ENCODE measurements at regions of chr5 and their contacts with region 1.

Region 1: GRCh38 chr5:141811287-141812155 is 66.7 kb downstream of the PCDH1 start:
- DNase-seq: peak; percentile 80
- ATAC-seq: peak; percentile 62
- H3K4me3 Mint-ChIP-seq: peak overlapping the region; percentile 61
- H3K27ac Mint-ChIP-seq: peak overlapping the region; percentile 61; the same call in 1 of the 2 replicates
- H3K4me1 Mint-ChIP-seq: peaks cover 85% of the 10 kb centered on the region
- H3K27me3 Mint-ChIP-seq: peaks cover 2% of the 10 kb centered on the region; the same call in 1 of the 2 replicates
- CTCF ChIP-seq: peak; percentile 67

Region 2: DNA sequence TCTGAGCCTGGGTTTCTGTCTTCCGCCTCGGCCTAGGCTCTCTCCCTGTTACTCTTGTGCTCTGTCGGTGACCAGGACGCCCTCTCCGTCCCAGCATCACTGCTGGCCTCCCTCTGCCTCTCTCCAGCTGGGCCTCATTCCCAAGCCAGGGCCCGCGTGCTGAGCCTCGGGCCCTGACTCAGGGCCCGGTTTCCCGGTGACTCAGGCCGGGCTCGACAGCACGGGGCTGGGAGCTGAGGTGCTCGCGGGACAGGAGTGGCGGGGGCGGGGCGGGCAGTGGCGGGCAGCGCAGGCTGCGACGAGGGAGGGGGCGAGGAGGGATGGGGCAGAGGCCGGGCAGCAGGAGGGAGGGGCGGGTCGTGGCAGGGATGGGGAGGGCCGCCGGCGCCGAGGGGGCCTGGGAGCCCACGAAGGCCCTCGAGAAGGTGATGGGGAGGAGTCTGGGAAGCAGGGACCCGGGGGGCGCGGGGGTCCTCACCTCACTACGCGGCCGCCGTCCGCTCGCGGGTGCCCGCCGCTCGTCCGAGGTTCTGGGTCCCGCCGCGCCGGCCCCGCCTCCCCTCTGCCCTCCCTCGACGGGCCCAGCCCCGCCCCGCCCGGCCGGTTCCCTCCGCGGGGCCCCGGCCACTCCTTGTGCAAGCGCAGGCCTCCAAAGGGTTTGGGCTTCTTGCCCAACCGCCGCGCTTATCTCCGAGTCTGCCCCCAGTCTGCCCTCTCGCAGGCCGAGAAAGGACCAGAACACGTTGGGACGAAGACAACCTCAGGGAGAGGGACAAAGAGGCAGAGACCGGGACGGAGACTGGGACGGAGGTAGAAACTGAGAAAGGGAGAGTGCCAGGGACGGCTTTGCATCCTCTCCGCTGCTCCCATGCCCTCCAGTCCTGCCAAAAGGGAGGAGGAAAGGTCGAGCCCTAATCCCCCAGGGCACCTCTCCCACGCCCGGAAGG is 129.6 kb before region 1 on chr5 and contains the start of gene ARAP3:
- CTCF ChIA-PET with region 1: interaction called, 11 read pairs
- POLR2A ChIA-PET with region 1: interaction called, 3 read pairs
- DNase-seq: peak; percentile 76
- ATAC-seq: peak; percentile 50
- H3K4me3 Mint-ChIP-seq: peak within 1 kb of the TSS; percentile 84
- H3K27ac Mint-ChIP-seq: peak within 1 kb of the TSS; percentile 96
- H3K4me1 Mint-ChIP-seq: peaks cover 50% of the 10 kb centered on the region
- H3K27me3 Mint-ChIP-seq: no peaks in the 10 kb centered on the region
- CTCF ChIP-seq: no peak
- total RNA-seq, gene ARAP3: 51.2 to 60.4 TPM (median 53.4 TPM) in 3 replicates

Region 3: DNA sequence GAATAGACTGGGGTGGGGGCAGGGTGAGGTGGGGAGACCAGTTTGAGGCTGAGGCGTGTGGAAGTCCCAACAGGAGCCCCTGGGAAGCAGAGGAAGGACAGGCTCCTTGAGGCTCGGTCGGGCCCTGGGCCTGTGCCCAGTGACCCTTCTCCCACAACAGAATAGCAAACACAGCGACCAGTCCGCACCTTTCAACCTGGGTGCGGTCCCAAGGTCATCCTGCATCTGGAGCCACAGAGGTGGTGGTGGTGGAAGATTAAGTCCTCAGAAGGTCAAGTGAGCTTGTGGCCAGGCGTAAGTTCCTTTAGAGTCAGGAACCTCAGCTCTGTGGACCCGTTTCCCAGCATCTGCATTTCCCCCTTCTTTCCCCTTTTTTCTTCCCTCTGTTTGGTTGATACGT is 103.5 kb before region 1 on chr5:
- CTCF ChIA-PET with region 1: interaction called, 55 read pairs
- POLR2A ChIA-PET with region 1: no interaction called
- DNase-seq: no peak
- ATAC-seq: no peak
- H3K4me3 Mint-ChIP-seq: no peak overlapping the region
- H3K27ac Mint-ChIP-seq: no peak overlapping the region
- H3K4me1 Mint-ChIP-seq: no peaks in the 10 kb centered on the region; the same call in none of the 2 replicates
- H3K27me3 Mint-ChIP-seq: no peaks in the 10 kb centered on the region; the same call in 1 of the 2 replicates
- CTCF ChIP-seq: no peak

Region 4: DNA sequence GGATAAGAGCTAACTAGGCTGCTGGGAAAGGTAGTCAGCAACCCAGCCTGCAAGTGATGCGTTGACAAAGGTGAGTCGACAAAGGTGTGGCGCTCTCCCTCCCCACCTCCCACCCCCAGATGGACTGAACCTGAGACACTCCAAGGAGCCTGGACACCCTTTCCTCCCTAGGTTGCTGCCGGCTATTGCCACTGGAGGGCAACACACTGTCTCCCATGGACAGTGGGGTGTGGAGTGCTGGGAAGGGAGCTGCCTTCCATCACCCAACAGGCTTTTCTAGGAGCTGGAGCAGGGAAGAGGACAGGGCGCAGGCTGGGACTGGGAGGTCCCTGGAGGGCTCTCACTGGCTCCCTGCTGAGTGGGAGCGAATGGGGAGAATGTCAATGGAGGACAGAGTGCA is 54.1 kb before region 1 on chr5:
- CTCF ChIA-PET with region 1: interaction called, 152 read pairs
- POLR2A ChIA-PET with region 1: interaction called, 7 read pairs
- DNase-seq: peak; percentile 70
- ATAC-seq: peak; percentile 62
- H3K4me3 Mint-ChIP-seq: peak overlapping the region; percentile 24; the same call in 1 of the 2 replicates
- H3K27ac Mint-ChIP-seq: no peak overlapping the region
- H3K4me1 Mint-ChIP-seq: peaks cover 49% of the 10 kb centered on the region
- H3K27me3 Mint-ChIP-seq: peaks cover 21% of the 10 kb centered on the region
- CTCF ChIP-seq: 0 out of 2 replicates have a peak, but pooled peaks have one; percentile 13

Region 5: DNA sequence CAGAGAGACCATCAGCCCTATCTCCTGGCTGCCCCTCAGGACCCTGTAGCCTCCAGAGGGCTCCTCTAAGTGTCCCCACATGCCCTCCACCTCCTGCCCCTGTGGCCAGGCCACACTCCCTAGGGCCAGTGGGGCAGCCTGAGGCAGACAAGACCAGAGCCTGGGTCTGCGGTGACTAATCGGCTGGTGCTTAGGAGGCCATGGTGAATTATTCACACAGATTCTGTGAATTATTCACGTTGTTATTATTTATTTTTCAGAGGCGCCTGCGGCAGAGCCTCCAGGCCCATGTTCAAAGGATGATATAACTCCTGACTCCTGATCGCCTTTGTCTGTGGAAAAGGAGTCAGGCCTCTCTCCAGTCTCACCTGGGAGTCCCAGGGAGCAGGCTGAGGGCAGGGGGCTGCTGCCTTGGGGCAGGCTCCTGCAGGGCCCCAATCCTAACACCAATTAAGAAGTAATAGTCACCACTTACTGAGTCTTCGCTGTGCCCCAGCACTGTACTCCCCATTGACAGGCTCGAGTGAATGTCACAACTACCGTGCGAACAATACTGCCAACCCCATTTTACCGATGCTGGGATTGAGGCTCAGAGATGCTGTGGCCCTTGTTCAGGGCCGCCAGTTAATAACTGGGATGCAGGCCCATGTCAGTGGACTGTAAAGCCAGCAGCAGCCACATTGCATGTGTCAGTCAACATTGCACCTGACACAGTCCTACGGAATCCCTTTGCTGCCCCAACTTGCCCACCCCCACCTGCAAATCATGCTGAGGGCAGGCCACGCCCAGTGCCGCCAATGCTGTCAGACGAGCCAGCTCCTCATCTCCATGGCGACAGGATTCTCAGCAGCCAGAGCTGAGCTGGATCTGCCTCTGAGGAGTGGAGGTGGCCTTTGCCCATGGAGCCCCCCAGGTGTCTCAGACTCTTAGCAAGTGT is 28.2 kb before region 1 on chr5:
- CTCF ChIA-PET with region 1: interaction called, 46 read pairs
- POLR2A ChIA-PET with region 1: interaction called, 3 read pairs
- DNase-seq: peak; percentile 48
- ATAC-seq: peak; percentile 29
- H3K4me3 Mint-ChIP-seq: no peak overlapping the region
- H3K27ac Mint-ChIP-seq: no peak overlapping the region
- H3K4me1 Mint-ChIP-seq: peaks cover 43% of the 10 kb centered on the region
- H3K27me3 Mint-ChIP-seq: no peaks in the 10 kb centered on the region
- CTCF ChIP-seq: no peak

Region 6: DNA sequence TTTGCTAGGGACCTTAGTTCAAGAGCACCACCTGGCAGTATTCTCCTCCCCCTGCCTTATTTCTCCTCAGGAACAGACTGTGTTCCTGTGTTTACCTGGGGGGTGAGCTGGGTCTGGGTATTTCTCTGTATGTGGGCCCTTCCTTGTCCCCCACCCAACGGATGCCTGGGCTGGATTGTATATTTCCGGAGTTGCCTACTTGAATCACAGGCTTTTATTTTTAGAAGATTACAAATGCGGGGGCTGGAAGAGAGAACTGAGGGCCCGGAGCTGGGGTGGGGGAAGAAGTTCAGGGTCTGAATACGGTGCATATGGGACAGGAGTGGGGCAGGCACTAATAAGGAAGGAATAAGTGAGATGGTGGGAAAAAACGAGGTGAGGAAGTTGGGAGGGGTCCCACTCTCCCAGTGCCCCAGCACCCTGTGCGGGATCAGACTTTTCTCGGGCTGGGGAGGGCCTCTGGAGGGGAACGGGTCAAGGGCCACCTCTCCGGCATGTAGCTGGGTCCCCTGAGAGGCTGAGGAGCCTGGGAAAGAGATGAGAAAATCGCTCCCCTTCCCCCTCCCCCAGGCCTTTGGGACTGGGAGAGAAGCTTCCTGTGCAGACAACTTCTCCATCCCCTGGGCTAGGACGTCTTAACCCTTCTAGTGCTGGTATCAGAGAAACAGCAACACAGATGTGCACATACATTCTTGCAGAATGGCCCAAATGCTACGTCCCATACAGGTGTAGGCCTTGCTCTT is 24.6 kb after region 1 on chr5:
- CTCF ChIA-PET with region 1: interaction called, 79 read pairs
- POLR2A ChIA-PET with region 1: interaction called, 47 read pairs
- DNase-seq: no peak
- ATAC-seq: peak; percentile 5; the same call in 1 of the 2 replicates
- H3K4me3 Mint-ChIP-seq: peak overlapping the region; percentile 29; the same call in 1 of the 2 replicates
- H3K27ac Mint-ChIP-seq: peak overlapping the region; percentile 96
- H3K4me1 Mint-ChIP-seq: peaks cover 76% of the 10 kb centered on the region
- H3K27me3 Mint-ChIP-seq: peaks cover 8% of the 10 kb centered on the region
- CTCF ChIP-seq: no peak

Region 7: GRCh38 chr5:141960449-141961202 is 149.1 kb after region 1 on chr5:
- CTCF ChIA-PET with region 1: interaction called, 17 read pairs
- POLR2A ChIA-PET with region 1: no interaction called
- DNase-seq: peak; percentile 88
- ATAC-seq: peak; percentile 90
- H3K4me3 Mint-ChIP-seq: no peak overlapping the region
- H3K27ac Mint-ChIP-seq: 0 out of 2 replicates have a peak overlapping the region, but pooled peaks have one; percentile 24
- H3K4me1 Mint-ChIP-seq: peaks cover 38% of the 10 kb centered on the region
- H3K27me3 Mint-ChIP-seq: no peaks in the 10 kb centered on the region
- CTCF ChIP-seq: peak; percentile 91

Measured in WTC11 (cell line).